ENCODE measurements at regions of chr1 and their contacts with region 1.

Region 1: DNA sequence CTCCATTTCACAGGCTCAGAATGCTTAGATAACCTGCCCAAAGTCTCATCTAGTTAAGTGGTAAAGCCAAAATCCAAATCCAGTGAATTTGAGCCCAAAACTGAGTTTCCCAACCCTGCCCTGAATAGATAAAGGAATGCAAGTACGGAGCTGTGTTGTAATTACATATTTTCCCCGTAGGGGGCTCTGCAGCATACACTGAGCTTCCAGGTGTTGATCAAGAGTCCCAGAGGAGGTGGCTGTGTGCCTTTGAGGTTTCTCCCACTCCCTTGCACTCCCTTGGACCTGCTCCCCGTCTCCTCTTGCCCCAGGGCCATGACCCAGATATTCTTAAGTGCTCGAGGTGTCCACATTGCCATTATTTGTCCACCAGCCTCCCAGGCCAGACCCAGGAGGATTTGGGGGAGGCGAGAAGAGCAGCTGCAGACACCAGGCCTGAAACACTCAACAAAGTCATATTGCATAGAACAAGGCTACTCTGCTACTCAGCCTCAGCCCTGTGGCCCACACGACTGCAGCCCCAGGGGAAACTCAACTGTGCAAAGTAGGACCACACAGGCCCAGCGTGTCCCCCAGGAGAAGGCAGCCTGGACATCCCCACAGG is 18.4 kb upstream of the LY9 start:
- DNase-seq: peak; percentile 58
- H3K4me3 Mint-ChIP-seq: no peak overlapping the region
- H3K27ac Mint-ChIP-seq: no peak overlapping the region
- H3K4me1 Mint-ChIP-seq: peaks cover 24% of the 10 kb centered on the region
- H3K27me3 Mint-ChIP-seq: no peaks in the 10 kb centered on the region
- CTCF ChIP-seq: peak; percentile 68

Region 2: DNA sequence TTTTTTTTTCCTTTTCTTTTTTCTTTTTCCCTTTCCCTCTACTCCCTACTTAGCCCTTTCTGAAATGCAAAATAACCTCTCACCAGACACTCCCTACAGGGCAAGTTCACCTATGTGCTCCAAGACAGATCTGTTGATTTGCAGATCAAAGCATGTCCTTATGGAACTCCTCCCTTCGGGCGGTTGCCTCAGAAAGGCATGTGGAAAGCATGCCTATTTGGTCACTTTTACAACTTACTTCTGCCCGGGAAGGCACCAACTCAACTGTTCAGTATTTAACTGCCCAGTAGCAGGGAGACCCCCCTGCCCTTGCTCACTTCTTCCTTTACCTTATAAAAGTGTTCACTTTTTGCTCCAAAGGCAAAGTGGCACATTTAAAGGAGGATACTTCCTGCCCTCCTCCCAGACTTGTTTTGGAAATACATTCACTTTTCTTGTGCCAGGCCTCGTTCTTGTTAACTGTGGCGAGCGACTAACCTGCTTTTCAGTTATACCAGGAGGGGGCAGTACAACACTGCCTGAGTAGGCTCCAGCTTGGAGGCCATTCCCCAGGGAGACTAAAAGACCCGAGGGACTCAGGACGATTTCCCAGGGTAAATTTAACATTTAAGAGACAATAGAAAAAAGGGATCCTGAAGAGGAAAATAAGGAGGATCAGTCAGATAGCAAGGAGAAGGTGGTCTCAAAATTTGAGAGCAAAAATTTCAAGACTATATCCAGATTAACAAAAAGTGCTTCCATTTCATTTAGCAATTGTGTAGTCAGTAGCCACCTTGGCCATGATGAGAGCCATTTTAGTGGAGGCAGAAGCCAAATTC is 50.9 kb before region 1 on chr1:
- CTCF ChIA-PET with region 1: interaction called, 3 read pairs
- intact Hi-C with region 1: loop called (anchors 2 kb)
- DNase-seq: peak; percentile 78
- H3K4me3 Mint-ChIP-seq: no peak overlapping the region
- H3K27ac Mint-ChIP-seq: no peak overlapping the region
- H3K4me1 Mint-ChIP-seq: no peaks in the 10 kb centered on the region
- H3K27me3 Mint-ChIP-seq: peaks cover 16% of the 10 kb centered on the region
- CTCF ChIP-seq: peak; percentile 91

Region 3: DNA sequence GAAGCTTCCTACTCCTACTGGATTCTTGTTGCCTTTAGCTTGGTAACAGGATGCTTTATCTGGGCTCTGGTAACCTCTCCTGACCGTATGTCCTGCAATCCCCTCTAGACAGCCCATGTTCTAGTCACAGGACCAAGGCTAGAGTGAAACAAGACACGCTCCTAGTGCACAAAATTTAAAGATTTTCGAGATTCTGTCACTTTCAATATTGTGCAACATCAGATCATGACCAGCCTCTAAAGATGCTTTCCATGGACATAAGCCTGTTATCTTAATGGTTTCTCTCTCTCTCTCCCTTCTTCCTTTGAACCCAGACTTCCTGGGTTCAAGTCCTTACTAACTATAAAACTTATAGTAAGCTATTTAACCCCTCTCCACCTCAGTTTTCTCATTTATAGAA is 16.8 kb after region 1 on chr1:
- CTCF ChIA-PET with region 1: interaction called, 12 read pairs
- intact Hi-C with region 1: no loop called
- DNase-seq: no peak
- H3K4me3 Mint-ChIP-seq: no peak overlapping the region
- H3K27ac Mint-ChIP-seq: no peak overlapping the region
- H3K4me1 Mint-ChIP-seq: no peaks in the 10 kb centered on the region
- H3K27me3 Mint-ChIP-seq: no peaks in the 10 kb centered on the region
- CTCF ChIP-seq: no peak

Region 4: GRCh38 chr1:160806109-160806665 is 28.6 kb after region 1 on chr1:
- CTCF ChIA-PET with region 1: interaction called, 3 read pairs
- intact Hi-C with region 1: loop called (anchors 2 kb)
- DNase-seq: no peak
- H3K4me3 Mint-ChIP-seq: no peak overlapping the region
- H3K27ac Mint-ChIP-seq: no peak overlapping the region
- H3K4me1 Mint-ChIP-seq: peaks cover 7% of the 10 kb centered on the region
- H3K27me3 Mint-ChIP-seq: no peaks in the 10 kb centered on the region
- CTCF ChIP-seq: no peak

Region 5: DNA sequence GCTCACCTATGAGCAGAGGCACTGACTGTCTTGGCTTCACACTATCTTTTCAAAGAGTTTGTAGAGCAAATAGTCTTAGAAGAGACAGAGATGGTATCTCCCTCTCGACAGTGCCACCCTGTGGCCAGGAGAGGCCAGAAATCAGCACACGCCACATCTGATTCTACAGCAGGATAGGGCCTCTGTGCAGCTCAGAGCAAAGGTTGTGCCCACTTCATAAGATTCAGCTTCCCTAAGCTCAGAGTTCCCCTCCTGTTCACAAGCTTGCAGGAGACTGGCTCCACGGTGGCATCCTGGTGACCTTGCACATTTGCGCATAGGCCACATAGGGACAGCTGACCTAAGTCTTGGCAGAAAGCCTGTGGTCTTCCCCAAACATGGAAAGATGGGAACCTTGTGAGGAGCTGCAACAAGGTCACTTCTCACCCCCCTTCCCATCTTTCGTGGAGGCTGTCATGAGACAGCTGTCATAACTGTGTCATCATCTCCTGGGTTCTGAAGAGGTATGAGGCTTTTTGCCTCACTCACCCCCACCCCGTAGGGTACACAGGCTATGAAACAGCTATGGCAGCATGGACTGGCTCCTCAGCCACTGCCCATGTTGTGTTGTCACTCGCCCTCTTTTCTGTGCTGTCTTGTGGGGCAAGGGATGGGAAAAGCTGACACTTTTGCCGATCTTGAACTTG is 174.0 kb after region 1 on chr1:
- CTCF ChIA-PET with region 1: interaction called, 6 read pairs
- intact Hi-C with region 1: loop called (anchors 1 kb)
- DNase-seq: peak; percentile 79
- H3K4me3 Mint-ChIP-seq: no peak overlapping the region
- H3K27ac Mint-ChIP-seq: no peak overlapping the region
- H3K4me1 Mint-ChIP-seq: peaks cover 64% of the 10 kb centered on the region
- H3K27me3 Mint-ChIP-seq: peaks cover 22% of the 10 kb centered on the region
- CTCF ChIP-seq: peak; percentile 88

Measured in Calu3 (cell line).